Dorsolateral prefrontal cortex (tissue), 120 donors: ENCODE measurements at regions of chr3 and their contacts with region 1.

Region 1: GRCh38 chr3:24773798-24774197 is 279.1 kb upstream of the THRB start:
- DNase-seq: peak in 9 of 10 donors; percentile 9 to 72 (median 57)
- H3K4me3 ChIP-seq: no peak overlapping the region
- H3K27ac ChIP-seq: no peak overlapping the region
- H3K27me3 ChIP-seq: no peaks in the 10 kb centered on the region
- CTCF ChIP-seq: peak; percentile 20 to 91 (median 76)

Region 2: GRCh38 chr3:25094932-25095685 is 321.3 kb after region 1 on chr3:
- intact Hi-C with region 1: loop called in 1 of 2 experiments (anchors 5 kb)
- DNase-seq: no peak
- H3K4me3 ChIP-seq: no peak overlapping the region
- H3K27ac ChIP-seq: no peak overlapping the region
- H3K27me3 ChIP-seq: peaks cover 0 to 16% (median 0%) of the 10 kb centered on the region in 45 donors
- CTCF ChIP-seq: peak in 37 of 56 donors; percentile 5 to 61 (median 25)

Region 3: GRCh38 chr3:25110642-25111041 is 336.8 kb after region 1 on chr3:
- intact Hi-C with region 1: loop called in 1 of 2 experiments (anchors 10 kb)
- DNase-seq: no peak
- H3K4me3 ChIP-seq: no peak overlapping the region
- H3K27ac ChIP-seq: no peak overlapping the region
- H3K27me3 ChIP-seq: no peaks in the 10 kb centered on the region
- CTCF ChIP-seq: no peak